GM10248 (cell line): ENCODE measurements at regions of chr2 and their contacts with region 1.

Region 1: DNA sequence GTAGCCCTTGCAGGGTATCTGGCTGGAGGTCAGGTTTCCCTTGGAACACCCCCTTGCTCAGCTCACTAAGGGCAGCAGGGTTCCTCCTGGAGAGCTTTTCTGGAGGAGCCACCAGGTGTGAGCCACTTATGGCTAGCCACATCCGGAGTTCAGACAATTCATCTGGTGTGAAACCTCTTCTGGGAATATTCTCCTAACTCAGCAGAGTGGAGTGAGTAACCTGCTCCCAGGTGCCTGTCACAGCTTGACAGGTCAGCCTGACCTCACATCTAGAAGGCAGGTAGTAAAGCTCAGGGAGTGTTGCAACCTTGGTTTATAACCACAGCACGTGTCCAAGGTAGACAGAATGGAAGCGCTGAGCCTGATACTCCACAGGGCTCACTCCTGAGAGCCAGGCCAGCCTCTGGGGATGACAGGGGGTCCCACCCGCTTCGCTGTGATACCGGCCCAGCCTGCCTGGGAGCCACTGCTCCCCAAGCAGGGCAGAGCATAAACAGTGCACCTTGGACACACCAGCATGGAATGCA is 62.6 kb upstream of the TGFA start:
- DNase-seq: no peak
- CTCF ChIP-seq: no peak

Region 2: DNA sequence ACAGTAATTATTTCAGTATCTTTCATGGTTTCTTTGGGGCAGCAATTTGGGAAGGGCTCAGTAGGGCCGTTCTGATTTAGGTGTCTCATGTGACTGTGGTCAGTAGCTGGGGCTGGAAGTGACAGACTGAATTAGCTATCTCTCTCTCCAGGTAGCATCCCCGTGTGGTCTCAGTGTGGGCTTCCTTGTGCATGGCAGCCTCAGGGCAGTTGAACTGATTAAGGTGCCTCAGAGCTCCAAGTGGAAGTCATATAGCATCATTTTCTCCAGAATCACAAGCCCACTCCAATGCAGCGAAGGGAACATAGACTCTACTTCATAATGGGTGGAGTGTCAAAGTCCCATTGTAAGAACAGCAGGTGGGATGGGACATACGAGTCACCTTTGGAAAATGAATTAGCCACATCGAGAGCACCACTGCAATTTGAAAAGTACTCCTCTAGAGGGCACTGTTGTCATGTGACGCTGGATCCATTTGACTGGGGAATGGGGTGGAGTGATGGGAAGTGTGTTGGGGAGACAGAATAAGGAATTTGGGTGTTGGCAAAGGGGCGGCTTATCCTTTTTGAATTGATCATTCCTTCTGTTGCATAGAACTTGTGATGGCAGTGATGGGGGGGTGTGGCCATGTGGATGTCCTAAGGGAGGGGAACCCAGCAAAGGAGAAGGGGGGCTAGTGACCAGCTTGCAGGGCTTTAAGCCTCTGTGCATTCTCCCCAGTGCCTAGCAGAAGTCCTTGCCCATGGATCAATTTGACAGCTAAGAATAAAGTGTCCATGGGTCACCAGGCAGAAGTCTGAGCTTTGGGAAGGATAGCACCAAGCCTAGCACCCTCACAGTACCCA is 275.1 kb before region 1 on chr2:
- CTCF ChIA-PET with region 1: interaction called, 81 read pairs
- POLR2A ChIA-PET with region 1: no interaction called
- DNase-seq: peak; percentile 60
- CTCF ChIP-seq: peak; percentile 71

Region 3: DNA sequence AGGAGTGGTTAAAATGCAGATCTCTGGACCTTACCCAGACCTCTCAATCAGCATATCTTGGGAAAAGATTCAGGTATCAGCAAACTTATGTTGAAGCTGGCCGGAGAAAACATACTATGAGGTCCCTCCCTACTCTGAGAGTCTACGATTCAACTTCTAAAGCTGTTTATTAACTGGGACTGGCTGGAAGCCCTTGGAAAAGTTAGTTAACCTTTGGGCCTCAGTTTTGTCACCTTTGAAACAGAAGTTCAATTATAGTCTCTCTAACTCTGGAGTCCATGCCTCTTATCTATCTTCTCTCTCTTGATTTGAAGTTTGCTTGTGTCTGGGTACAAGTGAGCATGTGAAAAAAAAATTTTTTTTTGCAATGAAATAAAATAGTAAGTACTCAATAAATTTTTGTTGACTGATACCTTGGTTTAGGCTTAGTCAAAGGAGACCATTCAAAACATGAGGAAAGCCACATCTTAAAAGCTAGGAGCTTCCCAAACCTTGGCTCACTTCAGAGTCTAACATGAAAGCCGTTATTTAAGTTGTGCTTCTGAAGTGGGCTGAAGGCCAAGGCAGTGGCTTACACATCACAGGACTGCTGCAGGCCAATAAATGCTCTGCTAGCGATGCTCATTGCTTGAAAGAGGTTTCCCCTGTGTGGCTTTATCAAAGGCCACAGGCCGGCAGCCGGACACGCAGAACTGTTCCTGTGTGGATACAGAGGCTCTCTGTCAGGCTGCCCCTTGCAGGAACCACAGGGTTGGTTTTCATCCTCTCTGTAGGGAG is 203.7 kb before region 1 on chr2:
- CTCF ChIA-PET with region 1: no interaction called
- POLR2A ChIA-PET with region 1: no interaction called
- DNase-seq: no peak
- CTCF ChIP-seq: no peak

Region 4: GRCh38 chr2:70627211-70627902 is 11.1 kb after region 1 on chr2:
- CTCF ChIA-PET with region 1: interaction called, 17 read pairs
- POLR2A ChIA-PET with region 1: no interaction called
- DNase-seq: no peak
- CTCF ChIP-seq: no peak

Region 5: DNA sequence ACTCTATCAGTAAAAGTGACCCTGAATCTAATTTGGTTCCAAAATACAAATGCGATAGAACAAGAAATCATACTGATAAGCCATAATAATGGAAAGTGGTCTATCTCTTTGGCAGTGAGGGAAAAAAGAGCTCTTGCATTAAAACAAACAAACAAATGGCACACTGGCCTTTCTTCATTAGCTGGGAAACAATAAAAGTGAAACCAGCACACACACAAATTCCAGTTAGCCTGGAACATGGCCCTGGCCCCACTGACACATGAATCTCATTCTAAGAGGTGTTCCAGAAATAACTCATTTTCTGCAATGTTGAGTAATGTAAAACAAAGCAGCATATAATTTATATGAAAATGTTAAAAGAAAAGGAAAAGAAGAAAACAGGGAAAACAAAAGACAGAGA is 16.7 kb after region 1 on chr2:
- CTCF ChIA-PET with region 1: interaction called, 23 read pairs
- POLR2A ChIA-PET with region 1: no interaction called
- DNase-seq: no peak
- CTCF ChIP-seq: no peak

Region 6: DNA sequence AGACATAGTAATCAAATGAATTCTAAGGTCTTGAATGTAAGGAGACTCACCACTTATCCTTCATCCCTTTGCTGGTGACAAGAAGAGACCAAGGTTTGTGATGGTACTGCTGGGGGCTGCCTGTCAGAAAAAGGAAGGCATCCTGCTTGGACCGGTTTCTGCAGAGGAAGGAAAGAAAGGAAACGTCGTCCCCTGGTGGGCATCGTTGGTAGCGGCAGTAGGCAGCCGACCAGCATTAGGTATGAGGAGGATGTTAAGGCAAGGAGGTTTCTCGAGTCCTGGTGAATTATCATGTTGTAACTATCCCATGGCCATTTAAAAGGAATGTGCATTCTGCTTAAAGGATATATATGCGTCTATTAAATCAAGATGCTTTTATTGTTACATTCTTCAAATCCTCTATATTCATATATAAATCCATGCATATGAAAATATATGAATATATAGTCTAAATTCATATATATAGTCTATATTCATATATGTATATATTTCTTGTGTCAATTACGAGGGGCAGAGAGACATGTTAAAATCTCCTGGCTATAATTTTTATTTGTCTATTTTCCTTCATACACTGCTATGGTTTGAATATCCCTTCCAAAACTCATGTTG is 31.7 kb after region 1 on chr2:
- CTCF ChIA-PET with region 1: interaction called, 20 read pairs
- POLR2A ChIA-PET with region 1: no interaction called
- DNase-seq: peak; percentile 54
- CTCF ChIP-seq: peak; percentile 81

Region 7: DNA sequence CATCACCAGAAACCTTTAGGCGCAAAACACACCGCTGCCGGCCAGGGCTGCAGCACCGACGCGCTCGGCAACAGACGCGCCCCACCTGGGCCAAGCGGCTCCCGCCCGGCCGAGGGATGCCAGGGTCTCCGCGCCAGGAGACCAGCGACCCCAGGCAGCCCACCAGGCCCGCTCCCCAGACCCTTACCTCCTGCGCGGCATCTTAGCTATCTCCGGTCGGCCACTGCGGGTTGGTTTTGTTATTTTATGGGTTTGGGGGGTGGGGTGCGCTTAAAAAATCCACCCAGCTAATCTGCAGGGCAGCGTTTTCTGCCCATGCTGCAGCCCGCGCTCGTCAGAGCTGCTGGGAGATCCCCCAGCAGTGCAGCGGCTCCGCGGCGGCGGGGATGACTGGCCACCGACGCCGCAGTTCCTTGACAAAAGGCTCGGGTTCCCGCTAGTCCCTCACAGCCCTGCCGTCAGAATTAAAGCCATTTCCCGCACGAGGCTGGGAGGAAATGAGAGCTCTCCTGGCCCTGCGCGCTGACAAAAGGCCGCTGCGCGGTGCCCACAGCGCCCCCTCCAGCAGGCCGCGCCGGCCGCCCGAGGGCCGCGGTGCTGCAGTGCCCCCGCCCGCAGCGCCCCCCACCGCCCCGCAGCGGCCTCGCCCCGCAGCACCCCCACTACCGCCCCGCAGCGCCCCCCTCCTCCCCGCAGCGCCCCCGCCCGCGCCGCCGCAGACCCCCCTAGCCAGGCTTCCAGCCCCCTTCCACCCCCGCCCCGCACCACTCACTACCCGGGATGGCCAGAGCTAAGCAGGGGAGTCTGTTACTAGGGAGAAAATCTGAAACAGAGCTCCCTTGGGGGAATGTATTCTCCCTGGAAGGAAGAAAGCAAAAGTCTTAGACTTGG is 151.7 kb after region 1 on chr2 and contains the start of gene ADD2:
- CTCF ChIA-PET with region 1: no interaction called
- POLR2A ChIA-PET with region 1: no interaction called
- DNase-seq: peak; percentile 48
- CTCF ChIP-seq: peak; percentile 39